MCF 10A (cell line): ENCODE measurements at regions of chr4 and their contacts with region 1.

Region 1: DNA sequence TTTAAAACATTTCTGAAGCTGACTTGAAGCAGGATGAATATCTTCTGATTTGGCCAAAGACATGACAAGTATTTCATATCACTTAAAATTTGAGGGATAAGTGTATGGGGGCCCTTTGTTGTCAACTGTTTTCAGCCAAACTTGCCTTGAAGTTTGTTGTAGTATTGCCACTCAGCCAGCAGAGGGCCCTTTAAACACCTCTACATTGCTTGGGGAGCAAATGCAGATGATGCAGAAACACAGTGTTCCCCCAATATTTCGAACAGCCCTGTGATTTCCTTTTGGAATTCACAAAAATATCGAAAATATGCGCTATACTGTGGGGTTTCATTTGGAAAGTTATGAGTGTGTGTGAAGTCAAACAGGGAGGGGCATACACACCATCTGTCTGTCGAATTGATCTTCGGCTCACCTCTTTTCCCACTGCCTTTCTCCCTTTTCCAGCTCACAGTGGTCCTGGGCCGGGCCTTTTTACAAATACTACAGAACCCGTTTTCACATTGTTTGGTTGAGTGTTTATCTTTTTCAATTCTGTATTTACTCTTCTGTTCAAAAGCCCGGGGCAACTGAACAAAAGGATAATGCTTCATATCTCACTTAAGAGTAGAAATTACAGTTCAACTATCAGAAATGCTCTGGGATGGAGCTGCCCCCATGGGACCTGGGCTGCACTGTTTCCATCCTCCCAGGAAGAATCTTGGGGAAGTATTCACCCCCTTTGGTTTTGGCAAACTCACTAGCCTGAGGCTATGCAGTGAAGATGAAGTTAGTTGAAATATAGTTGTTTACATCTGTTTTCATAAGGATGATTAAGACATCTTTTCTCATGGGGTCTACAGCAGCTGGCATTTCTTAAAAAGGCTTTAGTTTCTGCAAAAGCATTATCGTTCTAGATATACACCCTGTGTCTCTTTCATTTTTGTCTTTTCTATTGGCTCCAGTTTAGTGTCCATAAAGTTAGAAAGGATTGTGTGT is 137.6 kb downstream of the EGF start:
- DNase-seq: peak; percentile 58
- H3K4me3 Mint-ChIP-seq: no peak overlapping the region
- H3K27ac Mint-ChIP-seq: no peak overlapping the region
- H3K4me1 Mint-ChIP-seq: peaks cover 11% of the 10 kb centered on the region
- H3K27me3 Mint-ChIP-seq: no peaks in the 10 kb centered on the region
- CTCF ChIP-seq: peak; percentile 82

Region 2: DNA sequence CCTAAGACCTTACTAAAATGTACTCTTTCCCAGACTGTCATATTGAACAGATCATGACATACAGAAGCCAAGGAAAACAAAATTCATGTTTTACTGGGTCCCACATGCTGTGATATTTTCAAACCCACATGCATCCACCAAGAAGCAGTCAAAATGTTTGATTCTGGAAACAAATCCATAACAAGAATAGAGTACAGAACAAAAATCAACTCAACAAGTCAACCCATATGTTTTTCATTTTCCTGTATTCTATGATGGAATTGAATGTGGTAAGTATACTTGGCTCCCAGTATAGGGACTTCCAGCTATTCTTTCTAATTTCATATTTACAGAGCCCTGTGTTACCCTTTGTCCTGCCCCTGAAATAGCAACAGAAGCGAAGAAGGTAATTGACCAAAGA is 854.6 kb before region 1 on chr4:
- CTCF ChIA-PET with region 1: no interaction called
- POLR2A ChIA-PET with region 1: no interaction called
- intact Hi-C with region 1: no loop called
- DNase-seq: no peak
- H3K4me3 Mint-ChIP-seq: no peak overlapping the region
- H3K27ac Mint-ChIP-seq: no peak overlapping the region
- H3K4me1 Mint-ChIP-seq: no peaks in the 10 kb centered on the region
- H3K27me3 Mint-ChIP-seq: no peaks in the 10 kb centered on the region
- CTCF ChIP-seq: no peak

Region 3: GRCh38 chr4:109985993-109986974 is 64.0 kb before region 1 on chr4:
- CTCF ChIA-PET with region 1: no interaction called
- POLR2A ChIA-PET with region 1: no interaction called
- intact Hi-C with region 1: no loop called
- DNase-seq: no peak
- H3K4me3 Mint-ChIP-seq: no peak overlapping the region
- H3K27ac Mint-ChIP-seq: no peak overlapping the region
- H3K4me1 Mint-ChIP-seq: peaks cover 25% of the 10 kb centered on the region
- H3K27me3 Mint-ChIP-seq: no peaks in the 10 kb centered on the region
- CTCF ChIP-seq: no peak

Region 4: GRCh38 chr4:110005461-110006056 is 44.7 kb before region 1 on chr4:
- CTCF ChIA-PET with region 1: interaction called, 22 read pairs
- POLR2A ChIA-PET with region 1: interaction called, 4 read pairs
- intact Hi-C with region 1: no loop called
- DNase-seq: peak; percentile 77
- H3K4me3 Mint-ChIP-seq: no peak overlapping the region
- H3K27ac Mint-ChIP-seq: no peak overlapping the region
- H3K4me1 Mint-ChIP-seq: peaks cover 6% of the 10 kb centered on the region
- H3K27me3 Mint-ChIP-seq: no peaks in the 10 kb centered on the region
- CTCF ChIP-seq: peak; percentile 64

Region 5: GRCh38 chr4:110034026-110034393 is 16.2 kb before region 1 on chr4:
- CTCF ChIA-PET with region 1: interaction called, 47 read pairs
- POLR2A ChIA-PET with region 1: no interaction called
- intact Hi-C with region 1: no loop called
- DNase-seq: no peak
- H3K4me3 Mint-ChIP-seq: no peak overlapping the region
- H3K27ac Mint-ChIP-seq: no peak overlapping the region
- H3K4me1 Mint-ChIP-seq: no peaks in the 10 kb centered on the region
- H3K27me3 Mint-ChIP-seq: no peaks in the 10 kb centered on the region
- CTCF ChIP-seq: no peak

Region 6: DNA sequence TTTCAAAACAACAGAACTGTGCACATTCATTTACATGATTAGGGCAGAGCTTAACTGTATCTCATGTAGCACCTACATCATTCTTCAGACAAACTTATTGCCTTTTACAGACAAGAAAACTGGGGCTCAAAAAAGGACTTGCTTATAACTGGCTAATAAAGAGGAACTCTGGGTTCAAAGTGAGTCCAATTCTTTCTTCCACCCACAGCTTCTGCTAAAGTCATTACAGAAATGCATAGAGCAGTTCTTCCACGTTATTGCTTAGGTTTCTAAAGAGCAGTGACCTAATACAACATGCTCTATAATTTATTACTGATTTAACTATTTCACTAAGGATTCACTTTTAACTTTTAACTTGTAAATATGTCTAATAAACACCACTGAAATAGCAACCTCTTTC is 87.6 kb after region 1 on chr4:
- CTCF ChIA-PET with region 1: interaction called, 11 read pairs
- POLR2A ChIA-PET with region 1: no interaction called
- intact Hi-C with region 1: no loop called
- DNase-seq: no peak
- H3K4me3 Mint-ChIP-seq: no peak overlapping the region
- H3K27ac Mint-ChIP-seq: no peak overlapping the region
- H3K4me1 Mint-ChIP-seq: peaks cover 8% of the 10 kb centered on the region
- H3K27me3 Mint-ChIP-seq: no peaks in the 10 kb centered on the region
- CTCF ChIP-seq: no peak

Region 7: DNA sequence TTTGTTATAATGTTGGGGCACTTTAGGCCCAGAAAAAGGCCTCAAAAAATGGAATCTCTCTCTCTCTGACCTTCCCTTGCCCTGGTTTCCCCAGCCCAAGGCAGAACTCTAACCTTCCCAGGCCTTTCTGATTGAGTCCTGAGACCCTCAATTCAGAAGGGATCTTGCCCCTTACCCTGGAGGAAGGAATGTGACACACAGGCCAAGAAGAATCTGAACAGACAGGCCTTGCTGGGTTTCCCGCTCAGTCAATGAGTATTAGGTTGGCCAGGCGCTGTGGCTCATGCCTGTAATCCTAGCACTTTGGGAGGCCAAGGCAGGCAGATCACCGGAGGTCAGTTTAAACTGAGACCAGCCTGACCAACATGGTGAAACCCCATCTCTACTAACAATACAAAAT is 120.6 kb after region 1 on chr4:
- CTCF ChIA-PET with region 1: interaction called, 21 read pairs
- POLR2A ChIA-PET with region 1: no interaction called
- intact Hi-C with region 1: no loop called
- DNase-seq: no peak
- H3K4me3 Mint-ChIP-seq: no peak overlapping the region
- H3K27ac Mint-ChIP-seq: no peak overlapping the region
- H3K4me1 Mint-ChIP-seq: peaks cover 2% of the 10 kb centered on the region
- H3K27me3 Mint-ChIP-seq: no peaks in the 10 kb centered on the region
- CTCF ChIP-seq: no peak

Region 8: GRCh38 chr4:110211007-110211769 is 160.9 kb after region 1 on chr4:
- CTCF ChIA-PET with region 1: interaction called, 38 read pairs
- POLR2A ChIA-PET with region 1: interaction called, 4 read pairs
- intact Hi-C with region 1: loop called (anchors 1 kb)
- DNase-seq: peak; percentile 66
- H3K4me3 Mint-ChIP-seq: no peak overlapping the region
- H3K27ac Mint-ChIP-seq: no peak overlapping the region
- H3K4me1 Mint-ChIP-seq: no peaks in the 10 kb centered on the region
- H3K27me3 Mint-ChIP-seq: no peaks in the 10 kb centered on the region
- CTCF ChIP-seq: peak; percentile 79

Region 9: GRCh38 chr4:110516106-110516922 is 466.1 kb after region 1 on chr4:
- CTCF ChIA-PET with region 1: interaction called, 178 read pairs
- POLR2A ChIA-PET with region 1: no interaction called
- intact Hi-C with region 1: no loop called
- DNase-seq: peak; percentile 88
- H3K4me3 Mint-ChIP-seq: peak overlapping the region; percentile 80
- H3K27ac Mint-ChIP-seq: peak overlapping the region; percentile 75
- H3K4me1 Mint-ChIP-seq: no peaks in the 10 kb centered on the region
- H3K27me3 Mint-ChIP-seq: no peaks in the 10 kb centered on the region
- CTCF ChIP-seq: peak; percentile 56